Activated naive CD4-positive, alpha-beta T cell treated with anti-CD3 and anti-CD28 coated beads for 36 hours (primary cell): ENCODE measurements at regions of chr5 and their contacts with region 1.

Region 1: DNA sequence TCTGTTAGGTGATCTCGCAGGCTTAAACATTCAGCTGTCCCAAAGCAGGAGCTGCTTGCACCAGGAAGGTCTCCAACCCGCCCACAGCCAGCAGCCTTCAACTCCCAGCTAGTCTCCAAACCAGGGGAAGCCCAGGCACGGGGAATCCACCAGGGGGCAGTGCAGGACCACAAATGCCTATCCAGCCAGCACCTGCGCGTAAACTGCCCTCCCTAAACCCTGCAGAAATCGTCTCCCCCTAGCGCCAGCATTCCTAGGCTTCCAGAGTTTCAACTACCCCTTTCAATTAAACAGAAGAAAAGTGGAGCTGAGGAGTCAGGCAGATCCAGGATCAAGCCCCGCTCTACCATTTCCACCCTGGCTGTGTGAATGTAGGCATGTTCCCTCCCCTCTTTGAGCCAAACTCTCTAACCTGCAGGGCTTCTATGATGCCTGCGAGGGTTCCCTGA is 72.0 kb downstream of the HRH2 start:
- DNase-seq: peak; percentile 98
- H3K4me3 Mint-ChIP-seq: no peak overlapping the region
- H3K27ac Mint-ChIP-seq: no peak overlapping the region
- H3K4me1 Mint-ChIP-seq: peaks cover 7% of the 10 kb centered on the region
- H3K27me3 Mint-ChIP-seq: peaks cover 7% of the 10 kb centered on the region

Region 2: GRCh38 chr5:175718401-175719108 is 11.3 kb before region 1 on chr5:
- CTCF ChIA-PET with region 1: interaction called, 35 read pairs
- intact Hi-C with region 1: no loop called
- DNase-seq: peak; percentile 86
- H3K4me3 Mint-ChIP-seq: no peak overlapping the region
- H3K27ac Mint-ChIP-seq: no peak overlapping the region
- H3K4me1 Mint-ChIP-seq: peaks cover 6% of the 10 kb centered on the region
- H3K27me3 Mint-ChIP-seq: no peaks in the 10 kb centered on the region

Region 3: DNA sequence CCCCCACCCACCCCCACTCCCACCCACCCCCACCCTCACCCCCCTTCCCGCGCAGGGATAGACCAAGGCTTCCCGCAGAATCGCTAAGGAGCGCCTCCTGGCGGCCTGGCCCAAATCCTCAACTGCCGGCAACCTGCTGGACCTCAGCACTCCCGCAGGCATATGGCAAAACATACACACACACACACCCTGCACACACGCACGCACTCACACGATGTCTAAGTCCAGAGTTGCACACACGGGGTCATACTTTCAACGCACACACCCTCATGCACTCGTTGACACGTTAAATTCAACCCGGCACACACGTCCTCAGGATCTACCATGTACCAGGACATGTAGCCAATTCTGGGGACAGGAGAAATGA is 143.2 kb after region 1 on chr5:
- CTCF ChIA-PET with region 1: interaction called, 6 read pairs
- intact Hi-C with region 1: loop called (anchors 2 kb)
- DNase-seq: peak; percentile 38
- H3K4me3 Mint-ChIP-seq: no peak overlapping the region
- H3K27ac Mint-ChIP-seq: no peak overlapping the region
- H3K4me1 Mint-ChIP-seq: peaks cover 8% of the 10 kb centered on the region
- H3K27me3 Mint-ChIP-seq: peaks cover 48% of the 10 kb centered on the region